BJ (cell line): ENCODE measurements at regions of chr6 and their contacts with region 1.

Region 1: DNA sequence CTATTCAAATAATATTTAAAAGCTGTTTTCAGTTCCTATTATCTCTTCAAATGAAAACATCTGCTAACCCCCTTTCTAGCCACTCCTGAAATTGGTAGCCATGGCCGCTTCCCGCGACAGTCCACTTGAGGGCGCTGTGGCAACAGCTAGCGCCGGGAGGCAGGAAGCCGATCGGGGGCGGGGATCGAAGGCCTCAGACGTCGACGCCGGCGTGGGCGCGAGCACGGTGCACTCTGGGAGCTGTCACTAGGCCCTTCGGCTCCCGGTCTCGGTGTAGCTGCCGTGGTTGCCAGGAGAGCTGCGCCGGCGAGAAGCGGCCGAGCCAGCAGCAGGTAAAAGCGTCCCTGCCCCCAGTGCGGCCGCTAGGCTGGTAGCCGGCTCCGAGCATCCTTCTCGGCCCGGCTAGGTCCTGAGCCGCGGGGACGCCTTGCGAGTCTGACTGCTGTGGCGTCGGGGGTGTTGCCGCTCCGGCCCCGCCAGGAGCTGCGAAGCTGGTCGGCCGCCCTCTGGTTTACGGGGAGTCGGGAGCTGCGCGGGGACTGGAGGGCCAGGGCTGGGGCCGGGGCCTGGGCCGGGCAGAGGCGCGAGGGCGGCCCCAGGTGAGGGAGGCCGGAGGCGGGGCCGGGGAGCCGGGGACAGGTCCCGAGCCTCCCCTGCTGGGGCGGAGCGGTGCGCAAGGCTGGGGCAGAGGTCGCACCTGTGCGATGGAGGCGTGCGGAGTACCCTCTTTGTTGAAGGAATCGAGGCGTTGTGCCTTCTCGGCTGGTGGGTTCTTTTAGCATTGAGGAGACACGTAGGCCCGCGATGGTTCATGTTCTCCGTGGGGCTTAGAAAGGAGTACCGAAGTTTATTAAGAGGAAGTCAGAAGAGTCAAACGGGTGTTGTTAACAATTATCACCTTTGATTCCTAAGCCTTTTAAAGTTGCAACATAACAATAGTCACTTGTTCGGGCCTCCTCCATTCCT is at the start of gene DOP1A:
- DNase-seq: peak; percentile 47
- H3K4me3 ChIP-seq: peak within 1 kb of the TSS; percentile 97
- H3K27me3 ChIP-seq: no peaks in the 10 kb centered on the region
- CTCF ChIP-seq: peak; percentile 99
- polyA plus RNA-seq, gene DOP1A: 4.7 and 11.5 TPM in 2 replicates

Region 2: GRCh38 chr6:82247634-82248232 is 820.0 kb before region 1 on chr6 and contains the start of gene IBTK:
- CTCF ChIA-PET with region 1: interaction called, 22 read pairs
- POLR2A ChIA-PET with region 1: no interaction called
- DNase-seq: peak; percentile 58
- H3K4me3 ChIP-seq: peak within 1 kb of the TSS; percentile 61
- H3K27me3 ChIP-seq: no peaks in the 10 kb centered on the region
- CTCF ChIP-seq: no peak
- polyA plus RNA-seq, gene IBTK: 13.0 and 29.8 TPM in 2 replicates

Region 3: DNA sequence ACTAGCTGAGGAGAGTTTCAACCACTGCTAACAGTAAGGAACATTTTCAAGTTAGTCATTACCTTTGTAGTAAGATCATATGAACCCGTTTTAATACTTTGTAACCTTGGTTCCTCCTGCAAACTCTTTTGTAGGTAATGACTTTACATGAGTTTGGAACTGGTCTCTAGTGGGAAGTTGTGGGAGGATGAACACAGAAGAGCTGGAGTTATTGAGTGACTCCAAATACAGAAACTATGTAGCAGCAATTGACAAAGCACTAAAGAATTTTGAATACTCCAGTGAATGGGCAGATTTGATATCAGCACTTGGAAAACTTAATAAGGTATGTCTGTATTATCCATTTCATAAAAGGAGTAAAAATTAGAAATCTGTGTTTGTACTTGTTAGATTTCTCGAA is 29.1 kb after region 1 on chr6:
- CTCF ChIA-PET with region 1: interaction called, 29 read pairs
- POLR2A ChIA-PET with region 1: no interaction called
- DNase-seq: no peak
- H3K4me3 ChIP-seq: no peak overlapping the region
- H3K27me3 ChIP-seq: no peaks in the 10 kb centered on the region
- CTCF ChIP-seq: no peak

Region 4: DNA sequence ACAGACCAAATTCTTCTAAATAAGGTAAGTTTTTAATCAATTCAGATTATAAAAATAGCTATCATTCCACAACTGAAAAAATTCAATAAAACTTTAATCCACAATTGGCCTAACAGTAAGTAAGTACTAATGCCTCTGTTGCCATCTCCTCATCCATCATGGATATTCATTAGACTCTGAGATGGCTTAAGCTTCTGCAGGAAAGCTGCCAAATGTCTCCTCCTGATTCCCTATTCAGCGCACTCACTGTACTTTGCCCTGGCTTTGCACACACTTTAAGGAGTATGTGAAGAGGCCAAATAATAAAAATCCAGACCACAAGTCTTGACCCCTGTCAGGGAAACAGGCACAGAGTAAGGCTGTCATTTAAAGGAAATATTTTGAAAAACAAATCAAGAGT is 101.8 kb after region 1 on chr6:
- CTCF ChIA-PET with region 1: interaction called, 11 read pairs
- POLR2A ChIA-PET with region 1: no interaction called
- DNase-seq: no peak
- H3K4me3 ChIP-seq: no peak overlapping the region
- H3K27me3 ChIP-seq: no peaks in the 10 kb centered on the region
- CTCF ChIP-seq: no peak

Region 5: DNA sequence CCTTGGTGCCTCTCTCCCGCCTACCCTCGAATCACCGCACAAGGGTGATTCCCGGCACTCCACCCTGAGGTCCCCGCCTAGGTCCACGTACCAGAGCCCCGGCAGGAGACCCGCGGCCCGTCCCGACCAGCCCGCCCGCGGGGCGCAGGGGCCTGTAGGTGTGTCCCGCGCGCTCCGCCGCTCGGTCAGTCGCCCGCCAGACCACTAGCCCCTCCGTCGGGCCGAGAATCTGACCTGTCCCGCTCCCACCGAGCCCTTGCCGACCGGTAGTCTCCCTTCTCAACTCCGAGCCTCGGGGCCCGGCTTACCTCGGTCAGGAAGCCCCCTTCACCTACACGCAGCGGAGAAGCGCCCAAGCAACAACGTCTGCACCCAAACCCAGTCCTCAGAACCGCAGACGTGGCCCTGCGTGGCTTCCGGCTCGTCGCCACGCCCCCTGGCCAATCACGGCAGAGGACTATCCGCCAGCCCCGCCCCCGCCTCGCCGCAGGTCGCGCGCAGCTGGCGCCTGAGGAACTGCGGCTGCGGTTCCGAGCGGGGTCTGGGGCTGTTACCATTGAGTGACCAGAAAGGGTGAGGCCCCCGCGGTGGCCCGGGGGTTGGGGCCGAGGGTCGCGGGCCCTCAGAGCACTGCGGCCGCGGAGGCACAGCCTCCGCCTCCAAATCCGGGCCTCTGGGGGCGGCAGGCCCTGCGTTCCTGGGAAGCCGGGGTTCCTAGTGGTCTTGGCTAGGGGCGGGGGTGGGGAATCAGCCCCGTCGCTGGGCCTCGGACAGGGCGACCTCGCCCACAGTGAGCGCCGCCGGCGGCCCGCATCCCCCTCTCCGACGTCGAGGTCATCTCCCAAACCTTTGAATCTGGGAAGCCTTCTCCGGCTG is 125.4 kb after region 1 on chr6 and contains the starts of genes PGM3 and RWDD2A:
- CTCF ChIA-PET with region 1: interaction called, 70 read pairs
- POLR2A ChIA-PET with region 1: no interaction called
- DNase-seq: no peak
- H3K4me3 ChIP-seq: peak within 1 kb of the TSS; percentile 93
- H3K27me3 ChIP-seq: no peaks in the 10 kb centered on the region
- CTCF ChIP-seq: no peak
- polyA plus RNA-seq, gene PGM3: 74.4 and 96.5 TPM in 2 replicates
- polyA plus RNA-seq, gene RWDD2A: 4.4 and 6.9 TPM in 2 replicates

Region 6: GRCh38 chr6:83231146-83231545 is 163.4 kb after region 1 on chr6:
- CTCF ChIA-PET with region 1: interaction called, 13 read pairs
- POLR2A ChIA-PET with region 1: no interaction called
- DNase-seq: peak; percentile 32
- H3K4me3 ChIP-seq: no peak overlapping the region
- H3K27me3 ChIP-seq: no peaks in the 10 kb centered on the region
- CTCF ChIP-seq: no peak